H1 (cell line): ENCODE measurements at regions of chr3 and their contacts with region 1.

Region 1: GRCh38 chr3:149771652-149772271 is 19.5 kb upstream of the COMMD2 start:
- DNase-seq: peak in 1 of 2 experiments; percentile 79
- H3K4me3 ChIP-seq: no peak overlapping the region
- H3K27ac ChIP-seq: no peak overlapping the region
- H3K4me1 ChIP-seq: no peaks in the 10 kb centered on the region
- H3K27me3 ChIP-seq: no peaks in the 10 kb centered on the region; a peak in 1 of 7 replicates
- CTCF ChIP-seq: peak; percentile 77 to 87 (median 86)
- EP300 ChIP-seq: no peak
- POLR2A ChIP-seq: no peak
- RAD21 ChIP-seq: peak; percentile 73 to 76

Region 2: GRCh38 chr3:149487598-149488197 is 284.1 kb before region 1 on chr3:
- CTCF ChIA-PET with region 1: interaction called, 12 read pairs
- POLR2A ChIA-PET with region 1: no interaction called
- DNase-seq: peak in 1 of 2 experiments; percentile 85
- H3K4me3 ChIP-seq: no peak overlapping the region
- H3K27ac ChIP-seq: no peak overlapping the region
- H3K4me1 ChIP-seq: no peaks in the 10 kb centered on the region
- H3K27me3 ChIP-seq: no peaks in the 10 kb centered on the region
- CTCF ChIP-seq: peak; percentile 71 to 95 (median 92)
- EP300 ChIP-seq: no peak
- POLR2A ChIP-seq: no peak
- RAD21 ChIP-seq: peak; percentile 41 to 59

Region 3: GRCh38 chr3:149536429-149536828 is 235.3 kb before region 1 on chr3:
- CTCF ChIA-PET with region 1: interaction called, 17 read pairs
- POLR2A ChIA-PET with region 1: no interaction called
- DNase-seq: peak in 1 of 2 experiments; percentile 63
- H3K4me3 ChIP-seq: peak overlapping the region in 1 of 4 experiments; percentile 21; a peak in 1 of 8 replicates
- H3K27ac ChIP-seq: no peak overlapping the region
- H3K4me1 ChIP-seq: peaks cover 2 to 10% (median 6%) of the 10 kb centered on the region in 4 experiments; a peak in 5 of 7 replicates
- H3K27me3 ChIP-seq: no peaks in the 10 kb centered on the region
- CTCF ChIP-seq: no peak
- EP300 ChIP-seq: no peak
- POLR2A ChIP-seq: no peak
- RAD21 ChIP-seq: no peak

Region 4: DNA sequence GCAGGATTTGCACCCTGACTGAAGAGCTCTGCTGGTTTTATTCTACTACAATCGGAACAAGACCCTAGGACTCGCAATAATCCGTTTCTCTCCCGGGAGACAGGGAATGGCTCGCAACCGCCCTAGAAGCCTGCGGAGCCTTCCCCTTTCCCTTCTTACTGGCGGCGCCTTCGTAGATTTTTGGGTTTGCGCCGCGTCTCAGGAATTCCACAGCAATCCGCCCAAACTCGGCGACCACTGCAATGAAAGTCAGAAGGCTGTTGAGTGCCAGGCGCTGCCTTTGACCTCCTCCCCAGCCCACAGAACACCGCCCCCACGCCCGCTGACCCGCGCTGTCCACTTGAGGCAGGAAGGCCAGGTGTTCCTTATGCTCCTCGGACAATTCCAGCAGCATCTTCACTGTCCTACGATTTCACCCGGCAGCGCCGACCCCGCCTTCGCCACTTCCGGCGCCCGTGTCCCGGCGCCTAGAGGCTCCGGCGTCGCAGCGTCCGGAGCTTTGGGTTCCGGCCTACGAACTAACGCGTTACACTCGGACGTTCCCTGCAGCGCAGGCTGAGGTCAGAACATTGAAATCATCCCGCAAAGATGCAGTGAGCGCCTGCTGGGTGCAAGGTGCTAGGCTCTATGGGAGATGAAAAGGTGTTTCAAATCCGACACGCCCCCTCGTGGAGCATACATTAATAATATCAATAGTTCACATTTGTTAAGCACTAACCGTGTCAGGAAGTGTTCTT is 19.5 kb before region 1 on chr3 and contains the start of gene COMMD2:
- CTCF ChIA-PET with region 1: interaction called, 23 read pairs
- POLR2A ChIA-PET with region 1: no interaction called
- DNase-seq: peak; percentile 69 to 81
- H3K4me3 ChIP-seq: peak within 1 kb of the TSS; percentile 84 to 96 (median 94)
- H3K27ac ChIP-seq: peak within 1 kb of the TSS; percentile 80; the same call in 1 of the 2 replicates
- H3K4me1 ChIP-seq: no peaks in the 10 kb centered on the region; a peak in 2 of 7 replicates
- H3K27me3 ChIP-seq: no peaks in the 10 kb centered on the region
- CTCF ChIP-seq: peak in 2 of 3 experiments; percentile 6 to 13; a peak in 2 of 4 replicates
- EP300 ChIP-seq: peak in 1 of 2 experiments; percentile 89; a peak in 1 of 3 replicates
- POLR2A ChIP-seq: peak; percentile 85 to 94
- RAD21 ChIP-seq: peak; percentile 4 to 16; a peak in 1 of 4 replicates
- total RNA-seq, gene COMMD2: 51.6 and 57.2 TPM in 2 replicates

Region 5: GRCh38 chr3:149801639-149802038 is 29.9 kb after region 1 on chr3:
- CTCF ChIA-PET with region 1: interaction called, 103 read pairs
- POLR2A ChIA-PET with region 1: no interaction called
- DNase-seq: no peak
- H3K4me3 ChIP-seq: no peak overlapping the region
- H3K27ac ChIP-seq: no peak overlapping the region
- H3K4me1 ChIP-seq: no peaks in the 10 kb centered on the region
- H3K27me3 ChIP-seq: no peaks in the 10 kb centered on the region
- CTCF ChIP-seq: no peak
- EP300 ChIP-seq: no peak
- POLR2A ChIP-seq: no peak
- RAD21 ChIP-seq: no peak

Region 6: GRCh38 chr3:149850787-149851584 is 79.2 kb after region 1 on chr3:
- CTCF ChIA-PET with region 1: interaction called, 13 read pairs
- POLR2A ChIA-PET with region 1: no interaction called
- DNase-seq: no peak
- H3K4me3 ChIP-seq: no peak overlapping the region
- H3K27ac ChIP-seq: no peak overlapping the region
- H3K4me1 ChIP-seq: no peaks in the 10 kb centered on the region; a peak in 1 of 7 replicates
- H3K27me3 ChIP-seq: no peaks in the 10 kb centered on the region
- CTCF ChIP-seq: no peak
- EP300 ChIP-seq: no peak
- POLR2A ChIP-seq: no peak
- RAD21 ChIP-seq: no peak

Region 7: DNA sequence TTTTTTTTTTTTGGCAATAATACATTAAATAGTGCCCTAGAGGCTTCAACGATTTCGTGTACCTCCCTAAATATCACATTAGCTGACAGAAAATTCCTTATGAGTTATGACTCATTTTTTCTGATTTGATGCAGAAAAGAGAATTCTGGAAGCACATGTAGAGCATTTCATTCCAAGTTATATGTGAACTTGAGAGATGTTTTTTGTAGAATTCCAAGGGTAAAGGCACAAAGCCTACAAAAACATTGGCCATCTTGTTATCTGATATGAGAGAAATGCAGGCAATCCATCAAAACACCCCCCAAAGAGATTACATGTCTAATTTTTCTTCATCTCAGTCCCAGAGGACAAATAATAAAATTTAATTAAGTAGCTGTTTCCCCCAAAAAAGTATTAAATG is 205.6 kb after region 1 on chr3:
- CTCF ChIA-PET with region 1: no interaction called
- POLR2A ChIA-PET with region 1: no interaction called
- DNase-seq: no peak
- H3K4me3 ChIP-seq: no peak overlapping the region
- H3K27ac ChIP-seq: no peak overlapping the region
- H3K4me1 ChIP-seq: peaks cover 0 to 2% (median 0%) of the 10 kb centered on the region in 4 experiments; a peak in 2 of 7 replicates
- H3K27me3 ChIP-seq: no peaks in the 10 kb centered on the region
- CTCF ChIP-seq: no peak
- EP300 ChIP-seq: no peak
- POLR2A ChIP-seq: no peak
- RAD21 ChIP-seq: no peak